T-cell (primary cell): ENCODE measurements at regions of chr3 and their contacts with region 1.

Region 1: GRCh38 chr3:15839568-15839967 is 41.8 kb upstream of the ANKRD28 start:
- DNase-seq: no peak
- ATAC-seq: no peak
- H3K4me3 ChIP-seq: no peak overlapping the region
- H3K4me3 Mint-ChIP-seq: no peak overlapping the region
- H3K27ac ChIP-seq: no peak overlapping the region
- H3K27ac Mint-ChIP-seq: no peak overlapping the region
- H3K4me1 ChIP-seq: no peaks in the 10 kb centered on the region
- H3K4me1 Mint-ChIP-seq: peaks cover 31 to 63% (median 34%) of the 10 kb centered on the region in 3 donors
- H3K27me3 ChIP-seq: no peaks in the 10 kb centered on the region
- H3K27me3 Mint-ChIP-seq: no peaks in the 10 kb centered on the region

Region 2: GRCh38 chr3:15754047-15754446 is 85.5 kb before region 1 on chr3:
- CTCF ChIA-PET with region 1: no interaction called
- POLR2A ChIA-PET with region 1: interaction called in 1 of 2 experiments, 10 read pairs
- DNase-seq: no peak
- ATAC-seq: no peak
- H3K4me3 ChIP-seq: no peak overlapping the region
- H3K4me3 Mint-ChIP-seq: no peak overlapping the region
- H3K27ac ChIP-seq: no peak overlapping the region
- H3K27ac Mint-ChIP-seq: no peak overlapping the region
- H3K4me1 ChIP-seq: no peaks in the 10 kb centered on the region
- H3K4me1 Mint-ChIP-seq: peaks cover 5 to 11% (median 7%) of the 10 kb centered on the region in 3 donors
- H3K27me3 ChIP-seq: no peaks in the 10 kb centered on the region
- H3K27me3 Mint-ChIP-seq: no peaks in the 10 kb centered on the region